Astrocyte of the cerebellum (primary cell): ENCODE measurements at regions of chr1 and their contacts with region 1.

Region 1: DNA sequence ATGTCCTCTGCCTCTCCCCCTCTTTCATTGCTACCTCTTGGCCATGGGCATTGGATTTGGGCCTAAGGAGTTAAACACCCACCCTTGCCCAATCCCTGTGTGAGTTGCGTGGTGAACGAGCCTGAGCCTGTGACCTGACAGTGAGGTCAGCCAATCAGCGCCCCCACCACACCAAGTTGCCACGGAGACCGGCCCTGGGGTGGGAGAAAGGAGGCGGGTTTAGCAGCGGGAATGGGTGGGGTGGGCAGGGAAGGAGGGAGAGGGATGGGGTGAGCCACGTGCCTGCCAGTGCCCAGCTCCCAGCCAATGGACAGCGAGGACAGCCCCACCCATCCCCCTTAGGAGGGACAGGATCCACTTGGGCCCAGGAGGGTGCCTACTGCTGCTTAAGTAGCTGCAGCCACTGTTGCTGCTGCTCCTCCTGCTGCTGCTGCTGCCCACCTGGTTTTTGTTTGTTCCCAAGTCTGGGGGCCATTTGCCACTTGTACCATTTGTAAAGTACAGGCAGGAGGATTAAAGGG is 9.5 kb downstream of the ZBTB7B start:
- DNase-seq: no peak
- H3K4me3 ChIP-seq: no peak overlapping the region
- CTCF ChIP-seq: no peak

Region 2: GRCh38 chr1:154943649-154944400 is 68.3 kb before region 1 on chr1:
- in situ Hi-C with region 1: no loop called
- DNase-seq: no peak
- H3K4me3 ChIP-seq: no peak overlapping the region
- CTCF ChIP-seq: peak; percentile 85

Region 3: GRCh38 chr1:154955718-154956543 is 56.2 kb before region 1 on chr1 and contains the start of gene PBXIP1:
- in situ Hi-C with region 1: loop called (anchors 5 kb)
- DNase-seq: peak; percentile 86
- H3K4me3 ChIP-seq: peak within 1 kb of the TSS; percentile 63
- CTCF ChIP-seq: peak; percentile 52

Region 4: GRCh38 chr1:154974063-154974807 is 37.9 kb before region 1 on chr1 and contains the start of gene CKS1B:
- in situ Hi-C with region 1: no loop called
- DNase-seq: peak; percentile 100
- H3K4me3 ChIP-seq: peak within 1 kb of the TSS; percentile 55
- CTCF ChIP-seq: no peak

Region 5: DNA sequence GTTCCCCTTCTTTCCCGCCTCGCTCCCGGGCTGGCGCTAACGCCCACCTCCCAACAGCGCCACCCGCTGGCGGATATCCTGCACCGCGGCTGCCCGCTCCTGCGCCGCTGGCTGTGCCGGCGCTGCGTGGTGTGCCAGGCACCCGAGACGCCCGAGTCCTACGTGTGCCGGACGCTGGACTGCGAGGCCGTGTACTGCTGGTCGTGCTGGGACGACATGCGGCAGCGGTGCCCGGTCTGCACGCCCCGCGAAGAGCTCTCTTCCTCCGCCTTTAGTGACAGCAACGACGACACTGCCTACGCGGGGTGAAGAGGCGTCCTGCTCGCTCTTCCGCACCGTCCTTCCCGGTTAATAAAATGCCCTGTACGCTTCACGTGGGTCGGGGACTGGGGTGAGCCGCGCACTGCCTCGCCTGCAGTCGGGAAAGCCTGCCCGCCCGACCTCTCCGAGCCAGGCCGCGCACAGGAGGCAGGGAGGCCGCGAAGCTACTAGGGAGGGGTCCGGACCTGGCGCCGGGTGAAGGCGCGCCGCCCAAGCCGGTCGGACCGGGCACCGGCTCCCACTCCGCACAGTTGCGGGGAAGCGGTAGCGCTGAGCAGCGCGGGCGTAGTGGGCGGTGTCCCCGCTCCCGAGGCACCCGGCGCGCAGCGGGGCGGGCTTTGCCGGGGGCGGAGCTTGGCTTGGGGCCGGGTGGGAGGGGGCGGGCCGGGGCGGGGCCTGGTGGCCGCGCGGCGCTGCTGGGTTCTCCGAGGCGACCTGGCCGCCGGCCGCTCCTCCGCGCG is 38.7 kb after region 1 on chr1 and contains the start of gene ADAM15:
- in situ Hi-C with region 1: no loop called
- DNase-seq: no peak
- H3K4me3 ChIP-seq: peak within 1 kb of the TSS; percentile 61
- CTCF ChIP-seq: peak; percentile 77

Region 6: GRCh38 chr1:155063550-155064110 is 51.5 kb after region 1 on chr1 and contains the start of gene EFNA4:
- in situ Hi-C with region 1: loop called (anchors 5 kb)
- DNase-seq: peak; percentile 59
- H3K4me3 ChIP-seq: peak within 1 kb of the TSS; percentile 82
- CTCF ChIP-seq: no peak